ENCODE measurements at regions of chr6 and their contacts with region 1.

Region 1: DNA sequence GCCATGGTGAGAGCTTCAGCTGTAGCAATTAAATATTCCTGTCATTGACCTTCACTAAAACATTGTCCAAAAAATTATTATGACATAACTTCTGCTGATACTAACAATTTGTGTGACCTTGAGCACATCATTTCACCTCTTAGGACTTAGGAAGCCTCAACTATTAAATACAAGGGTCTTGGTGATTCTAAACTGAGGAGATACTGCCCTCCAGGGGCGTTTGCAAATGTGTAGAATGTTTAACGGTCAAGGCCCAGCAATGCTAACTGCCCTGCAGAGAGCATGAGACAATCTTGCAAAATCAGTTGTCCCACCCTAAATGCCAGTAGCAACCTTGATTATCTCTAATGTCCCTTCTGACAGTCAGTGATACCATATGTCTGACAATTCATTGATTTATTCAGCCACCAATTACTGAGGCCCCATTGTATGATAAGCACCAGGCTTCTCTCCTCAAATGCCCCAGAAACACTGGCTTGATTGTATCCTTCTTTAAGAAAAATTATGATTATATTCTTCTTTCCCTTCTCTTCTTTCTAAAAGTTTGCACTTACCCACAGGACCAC is 284.1 kb upstream of the PLN start:
- DNase-seq: peak in 2 of 10 donors; percentile 38 to 49
- H3K4me3 ChIP-seq: no peak overlapping the region
- H3K27ac ChIP-seq: peak overlapping the region in 8 of 59 donors; percentile 3 to 27 (median 18)
- H3K27me3 ChIP-seq: no peaks in the 10 kb centered on the region
- CTCF ChIP-seq: peak in 52 of 56 donors; percentile 16 to 80 (median 54)

Region 2: DNA sequence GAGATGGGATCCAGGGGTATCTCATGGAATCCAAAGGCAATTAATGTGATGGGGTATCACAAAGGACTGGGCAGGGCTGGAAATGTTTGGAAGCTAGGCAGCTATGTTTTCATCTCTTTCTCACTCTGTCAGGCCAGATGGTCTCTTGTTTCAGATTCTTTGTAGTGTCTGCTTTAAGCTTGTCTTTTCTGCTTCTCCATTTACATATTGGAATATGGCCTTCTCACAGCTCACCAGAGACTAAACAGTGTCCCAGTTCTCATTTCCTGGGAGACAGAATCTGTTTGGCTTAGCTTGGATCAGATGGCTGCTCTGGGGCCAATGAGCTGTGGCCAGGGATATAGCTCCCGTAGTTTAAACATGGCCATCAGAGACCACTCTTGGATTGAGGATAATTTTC is 278.1 kb before region 1 on chr6:
- intact Hi-C with region 1: loop called in 1 of 2 experiments (anchors 10 kb)
- DNase-seq: no peak
- H3K4me3 ChIP-seq: peak overlapping the region in 9 of 59 donors; percentile 6 to 39 (median 17)
- H3K27ac ChIP-seq: peak overlapping the region in 43 of 59 donors; percentile 0 to 79 (median 50)
- H3K27me3 ChIP-seq: no peaks in the 10 kb centered on the region
- CTCF ChIP-seq: no peak

Region 3: GRCh38 chr6:118111708-118112107 is 152.3 kb before region 1 on chr6:
- intact Hi-C with region 1: no loop called
- DNase-seq: no peak
- H3K4me3 ChIP-seq: no peak overlapping the region
- H3K27ac ChIP-seq: no peak overlapping the region
- H3K27me3 ChIP-seq: no peaks in the 10 kb centered on the region
- CTCF ChIP-seq: no peak

Measured in dorsolateral prefrontal cortex (tissue), 120 donors.